ENCODE measurements at regions of chr20 and their contacts with region 1.

Region 1: DNA sequence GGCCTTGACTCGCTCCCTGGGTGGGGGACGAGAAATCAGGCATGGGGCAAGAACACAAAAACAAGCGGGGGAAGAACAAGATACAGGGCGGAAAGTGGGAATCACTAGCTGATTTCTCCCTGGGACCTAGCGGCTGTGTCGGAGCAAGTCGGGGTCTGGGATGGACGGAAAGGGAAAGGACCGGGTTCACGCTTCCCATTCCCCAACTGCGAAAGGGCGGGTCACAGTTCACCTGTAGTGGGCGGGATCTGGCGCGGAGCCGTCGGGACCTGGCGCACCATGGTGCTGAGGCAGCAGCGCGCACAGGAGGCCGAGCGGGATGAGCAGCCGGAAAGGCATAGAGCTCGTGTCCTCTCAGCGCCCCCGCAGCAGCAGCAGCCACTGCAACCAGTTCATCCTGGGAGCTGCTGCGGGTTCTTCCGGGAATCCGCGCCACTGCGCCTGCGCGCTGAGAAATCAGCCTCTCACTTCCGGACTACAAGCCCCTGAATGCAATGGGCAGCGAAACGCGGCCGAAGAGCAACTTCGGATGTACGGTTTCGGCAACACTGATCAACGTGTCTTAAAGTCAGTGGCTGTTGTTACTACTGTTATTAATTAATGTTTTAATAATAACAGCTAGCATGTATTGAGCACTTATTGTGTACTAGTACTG is at the start of gene EDEM2:
- DNase-seq: peak; percentile 96
- ATAC-seq: peak; percentile 90
- H3K4me3 ChIP-seq: peak within 1 kb of the TSS; percentile 95
- H3K27ac ChIP-seq: peak within 1 kb of the TSS; percentile 51
- H3K4me1 ChIP-seq: peaks cover 10% of the 10 kb centered on the region
- H3K27me3 ChIP-seq: no peaks in the 10 kb centered on the region
- CTCF ChIP-seq: no peak
- total RNA-seq, gene EDEM2: 22.2 and 28.5 TPM in 2 replicates

Region 2: DNA sequence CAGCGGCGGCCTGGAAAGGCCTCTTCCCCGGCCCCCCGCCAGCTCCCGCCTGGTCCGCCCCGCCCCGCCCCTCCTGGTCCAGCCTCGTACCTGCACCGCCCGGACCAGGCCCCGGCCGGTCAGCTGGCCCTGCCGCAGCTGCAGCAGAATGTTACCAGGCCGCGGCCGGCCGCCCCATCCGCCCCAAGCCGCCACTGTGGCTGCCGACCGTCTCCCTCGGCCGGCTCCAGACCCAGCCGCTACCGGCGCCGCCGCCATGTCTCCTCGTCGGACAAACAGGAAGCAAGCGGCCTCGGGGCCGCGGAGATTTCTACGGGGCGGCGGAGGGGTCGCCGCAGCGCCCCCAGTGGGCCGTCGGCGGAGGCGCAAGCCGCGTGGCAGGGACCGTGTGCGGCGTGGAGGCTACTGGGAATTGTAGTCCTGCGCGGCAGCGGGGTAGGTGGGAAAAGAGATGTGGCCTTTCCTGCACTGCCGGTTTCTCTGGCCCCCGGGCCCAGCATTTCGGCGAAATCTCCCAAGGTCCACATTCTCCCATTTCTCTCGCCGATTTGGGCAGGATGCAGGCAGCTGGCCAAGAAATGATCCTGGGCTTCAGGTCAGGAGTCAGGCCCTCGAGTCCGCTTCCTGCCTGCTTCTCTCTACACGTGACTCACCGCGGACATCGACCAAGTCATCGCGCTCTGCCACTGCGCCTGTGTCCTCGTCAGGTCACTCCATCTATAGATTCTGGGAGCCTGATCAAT is 54.4 kb before region 1 on chr20 and contains the start of gene TRPC4AP:
- CTCF ChIA-PET with region 1: interaction called, 22 read pairs
- POLR2A ChIA-PET with region 1: no interaction called
- intact Hi-C with region 1: loop called (anchors 2 kb)
- DNase-seq: peak; percentile 94
- ATAC-seq: peak; percentile 88
- H3K4me3 ChIP-seq: peak within 1 kb of the TSS; percentile 97
- H3K27ac ChIP-seq: peak within 1 kb of the TSS; percentile 65
- H3K4me1 ChIP-seq: peaks cover 20% of the 10 kb centered on the region
- H3K27me3 ChIP-seq: no peaks in the 10 kb centered on the region
- CTCF ChIP-seq: peak; percentile 92
- total RNA-seq, gene TRPC4AP: 46.9 and 52.6 TPM in 2 replicates

Region 3: GRCh38 chr20:35171753-35172433 is 24.8 kb after region 1 on chr20 and contains the start of gene PROCR:
- CTCF ChIA-PET with region 1: interaction called, 10 read pairs
- POLR2A ChIA-PET with region 1: no interaction called
- intact Hi-C with region 1: loop called (anchors 1 kb)
- DNase-seq: peak; percentile 97
- ATAC-seq: peak; percentile 97
- H3K4me3 ChIP-seq: peak within 1 kb of the TSS; percentile 72
- H3K27ac ChIP-seq: no peak within 1 kb of the TSS
- H3K4me1 ChIP-seq: peaks cover 19% of the 10 kb centered on the region
- H3K27me3 ChIP-seq: no peaks in the 10 kb centered on the region
- CTCF ChIP-seq: no peak
- total RNA-seq, gene PROCR: 45.4 and 55.7 TPM in 2 replicates

Region 4: GRCh38 chr20:35207950-35208611 is 61.0 kb after region 1 on chr20:
- CTCF ChIA-PET with region 1: interaction called, 43 read pairs
- POLR2A ChIA-PET with region 1: no interaction called
- intact Hi-C with region 1: loop called (anchors 1 kb)
- DNase-seq: peak; percentile 86
- ATAC-seq: peak; percentile 98
- H3K4me3 ChIP-seq: peak overlapping the region; percentile 32; the same call in 1 of the 2 replicates
- H3K27ac ChIP-seq: no peak overlapping the region
- H3K4me1 ChIP-seq: no peaks in the 10 kb centered on the region
- H3K27me3 ChIP-seq: no peaks in the 10 kb centered on the region
- CTCF ChIP-seq: peak; percentile 93

Region 5: DNA sequence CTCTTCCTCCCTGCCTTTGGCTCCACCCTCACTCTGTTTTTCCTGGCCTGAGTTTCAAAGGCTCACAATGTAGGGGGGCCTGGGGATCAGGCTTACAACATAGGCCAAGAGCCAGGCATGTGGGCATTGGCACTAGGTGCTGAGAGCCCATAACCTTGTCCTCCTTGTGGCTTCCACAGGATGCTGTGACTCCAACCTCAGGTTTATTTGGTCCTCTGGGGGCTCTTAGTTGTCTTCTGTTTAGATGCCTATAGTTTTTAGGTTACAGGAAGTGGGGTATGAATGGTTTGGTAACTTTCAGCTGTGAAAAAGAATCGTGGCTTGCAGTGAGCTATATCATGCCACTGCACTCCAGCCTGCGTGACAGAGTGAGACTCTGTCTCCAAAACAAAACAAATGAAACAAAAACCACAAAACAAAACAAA is 105.0 kb after region 1 on chr20:
- CTCF ChIA-PET with region 1: no interaction called
- POLR2A ChIA-PET with region 1: no interaction called
- intact Hi-C with region 1: no loop called
- DNase-seq: no peak
- ATAC-seq: no peak
- H3K4me3 ChIP-seq: no peak overlapping the region
- H3K27ac ChIP-seq: no peak overlapping the region
- H3K4me1 ChIP-seq: no peaks in the 10 kb centered on the region
- H3K27me3 ChIP-seq: no peaks in the 10 kb centered on the region
- CTCF ChIP-seq: no peak

Region 6: DNA sequence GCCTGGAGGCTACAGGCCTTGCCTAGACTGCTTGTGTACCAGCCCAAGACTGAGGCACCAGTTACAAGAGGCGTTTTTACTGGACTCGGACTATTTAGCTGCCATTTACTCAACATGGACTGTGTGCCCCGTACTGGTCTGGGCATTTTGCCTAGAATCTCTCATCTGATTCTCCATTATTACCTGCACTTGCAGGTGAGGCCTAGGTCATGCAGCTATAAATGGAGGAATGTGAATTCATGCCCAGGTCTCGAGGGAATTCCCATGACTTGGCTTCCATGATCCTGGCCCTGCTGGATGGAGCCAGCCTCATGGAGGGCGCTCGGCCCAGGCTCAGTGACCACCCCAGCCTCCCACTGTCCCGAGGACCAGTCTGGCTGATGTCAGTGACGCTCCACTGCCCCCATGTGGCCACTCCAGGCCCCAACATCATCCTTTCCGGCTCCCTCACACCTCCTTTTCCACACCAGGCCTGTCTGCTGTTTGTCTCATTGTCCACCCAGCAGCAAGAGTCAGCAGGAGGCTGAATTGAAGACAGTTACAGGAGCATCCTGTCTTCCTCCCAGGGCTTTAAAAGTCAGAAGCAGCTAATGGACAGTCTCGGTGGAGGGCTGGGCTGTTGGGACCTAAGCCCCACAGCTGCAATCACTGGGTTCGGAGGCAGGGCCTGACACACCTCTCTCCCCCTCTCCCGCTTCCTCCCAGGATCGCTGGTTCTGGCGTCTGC is 122.2 kb after region 1 on chr20:
- CTCF ChIA-PET with region 1: interaction called, 19 read pairs
- POLR2A ChIA-PET with region 1: no interaction called
- intact Hi-C with region 1: loop called (anchors 1 kb)
- DNase-seq: peak; percentile 67
- ATAC-seq: peak; percentile 80
- H3K4me3 ChIP-seq: no peak overlapping the region
- H3K27ac ChIP-seq: no peak overlapping the region
- H3K4me1 ChIP-seq: peaks cover 5% of the 10 kb centered on the region
- H3K27me3 ChIP-seq: no peaks in the 10 kb centered on the region
- CTCF ChIP-seq: peak; percentile 94

Region 7: GRCh38 chr20:35359335-35359950 is 212.4 kb after region 1 on chr20:
- CTCF ChIA-PET with region 1: no interaction called
- POLR2A ChIA-PET with region 1: no interaction called
- intact Hi-C with region 1: no loop called
- DNase-seq: peak; percentile 10
- ATAC-seq: peak; percentile 21
- H3K4me3 ChIP-seq: no peak overlapping the region
- H3K27ac ChIP-seq: no peak overlapping the region
- H3K4me1 ChIP-seq: peaks cover 33% of the 10 kb centered on the region
- H3K27me3 ChIP-seq: no peaks in the 10 kb centered on the region
- CTCF ChIP-seq: no peak